Heart left ventricle (tissue), 16 donors: ENCODE measurements at regions of chr3 and their contacts with region 1.

Region 1: DNA sequence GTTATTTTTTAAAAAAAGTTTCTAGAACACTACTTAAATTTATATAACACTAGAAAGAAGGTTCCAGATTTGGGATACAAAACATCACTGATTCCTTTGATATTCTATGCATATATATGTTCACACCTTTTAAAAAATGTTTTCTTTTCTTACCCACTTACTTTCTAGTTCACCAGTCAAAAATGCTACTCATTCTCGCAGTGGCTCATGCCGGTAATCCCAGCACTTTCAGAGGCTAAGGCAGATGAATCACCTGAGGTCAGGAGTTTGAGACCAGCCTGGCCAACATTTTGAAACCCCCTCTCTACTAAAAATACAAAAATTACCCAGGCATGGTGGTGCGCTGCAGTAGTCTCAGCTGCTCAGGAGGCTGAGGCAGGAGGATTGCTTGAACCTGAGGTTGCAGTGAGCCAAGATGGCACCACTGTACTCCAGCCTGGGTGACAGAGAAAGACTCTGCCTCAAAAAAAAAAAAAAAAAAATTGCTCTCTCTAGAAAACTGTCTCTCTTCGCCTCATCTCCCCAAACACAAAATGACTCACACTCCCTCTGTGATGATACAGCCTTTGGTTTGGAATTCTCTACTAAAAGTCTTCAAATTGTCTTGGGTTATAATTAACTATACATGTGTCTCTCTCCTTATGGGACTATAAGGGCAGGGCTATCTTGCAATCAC is 52.6 kb upstream of the TGFBR2 start:
- DNase-seq: no peak
- ATAC-seq: no peak
- H3K4me3 ChIP-seq: no peak overlapping the region
- H3K27ac ChIP-seq: no peak overlapping the region
- H3K4me1 ChIP-seq: peaks cover 0 to 10% (median 2%) of the 10 kb centered on the region in 12 donors
- H3K27me3 ChIP-seq: no peaks in the 10 kb centered on the region
- CTCF ChIP-seq: no peak
- POLR2A ChIP-seq: no peak

Region 2: DNA sequence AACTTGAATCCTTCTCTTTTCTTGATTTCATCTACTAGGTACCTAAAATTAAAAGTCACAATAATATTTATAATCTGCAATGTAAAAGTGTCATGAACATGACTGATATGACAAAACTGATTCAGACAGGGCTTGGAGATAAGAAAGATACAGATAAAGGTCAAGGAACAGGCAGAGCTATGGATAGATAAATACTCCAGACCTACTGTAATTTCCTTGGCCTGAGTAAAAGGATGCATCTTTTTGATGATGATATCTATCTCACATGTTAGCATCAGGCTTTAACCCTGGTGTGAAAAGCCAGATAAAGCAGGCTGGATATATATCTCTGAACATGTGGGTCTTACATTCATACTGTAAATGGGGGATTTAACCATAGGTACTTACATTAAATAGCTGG is 232.6 kb after region 1 on chr3:
- intact Hi-C with region 1: no loop called
- DNase-seq: no peak
- ATAC-seq: no peak
- H3K4me3 ChIP-seq: no peak overlapping the region
- H3K27ac ChIP-seq: no peak overlapping the region
- H3K4me1 ChIP-seq: no peaks in the 10 kb centered on the region
- H3K27me3 ChIP-seq: no peaks in the 10 kb centered on the region
- CTCF ChIP-seq: no peak
- POLR2A ChIP-seq: no peak

Region 3: GRCh38 chr3:31777092-31777491 is 1223.3 kb after region 1 on chr3:
- intact Hi-C with region 1: loop called in 1 of 10 experiments (anchors 10 kb)
- DNase-seq: no peak
- ATAC-seq: no peak
- H3K4me3 ChIP-seq: no peak overlapping the region
- H3K27ac ChIP-seq: no peak overlapping the region
- H3K4me1 ChIP-seq: no peaks in the 10 kb centered on the region
- H3K27me3 ChIP-seq: no peaks in the 10 kb centered on the region
- CTCF ChIP-seq: no peak
- POLR2A ChIP-seq: no peak